Adrenal gland (tissue), 19 donors: ENCODE measurements at regions of chr17 and their contacts with region 1.

Region 1: GRCh38 chr17:73429440-73430164 is 117.8 kb upstream of the CDC42EP4 start:
- DNase-seq: peak; percentile 83 to 93 (median 89)
- H3K4me3 ChIP-seq: no peak overlapping the region
- H3K27ac ChIP-seq: no peak overlapping the region
- H3K4me1 ChIP-seq: no peaks in the 10 kb centered on the region
- H3K27me3 ChIP-seq: no peaks in the 10 kb centered on the region
- CTCF ChIP-seq: peak; percentile 90 to 98 (median 94)
- POLR2A ChIP-seq: no peak

Region 2: GRCh38 chr17:73255671-73256181 is 173.9 kb before region 1 on chr17:
- intact Hi-C with region 1: no loop called
- DNase-seq: peak in 6 of 7 donors; percentile 33 to 80 (median 49)
- H3K4me3 ChIP-seq: no peak overlapping the region
- H3K27ac ChIP-seq: no peak overlapping the region
- H3K4me1 ChIP-seq: no peaks in the 10 kb centered on the region
- H3K27me3 ChIP-seq: no peaks in the 10 kb centered on the region
- CTCF ChIP-seq: peak; percentile 97 to 100 (median 98)
- POLR2A ChIP-seq: no peak

Region 3: GRCh38 chr17:73710095-73710592 is 280.5 kb after region 1 on chr17:
- intact Hi-C with region 1: loop called (anchors 5 kb)
- DNase-seq: peak; percentile 57 to 80 (median 73)
- H3K4me3 ChIP-seq: no peak overlapping the region
- H3K27ac ChIP-seq: no peak overlapping the region
- H3K4me1 ChIP-seq: no peaks in the 10 kb centered on the region
- H3K27me3 ChIP-seq: no peaks in the 10 kb centered on the region
- CTCF ChIP-seq: peak; percentile 63 to 76 (median 74)
- POLR2A ChIP-seq: no peak

Region 4: DNA sequence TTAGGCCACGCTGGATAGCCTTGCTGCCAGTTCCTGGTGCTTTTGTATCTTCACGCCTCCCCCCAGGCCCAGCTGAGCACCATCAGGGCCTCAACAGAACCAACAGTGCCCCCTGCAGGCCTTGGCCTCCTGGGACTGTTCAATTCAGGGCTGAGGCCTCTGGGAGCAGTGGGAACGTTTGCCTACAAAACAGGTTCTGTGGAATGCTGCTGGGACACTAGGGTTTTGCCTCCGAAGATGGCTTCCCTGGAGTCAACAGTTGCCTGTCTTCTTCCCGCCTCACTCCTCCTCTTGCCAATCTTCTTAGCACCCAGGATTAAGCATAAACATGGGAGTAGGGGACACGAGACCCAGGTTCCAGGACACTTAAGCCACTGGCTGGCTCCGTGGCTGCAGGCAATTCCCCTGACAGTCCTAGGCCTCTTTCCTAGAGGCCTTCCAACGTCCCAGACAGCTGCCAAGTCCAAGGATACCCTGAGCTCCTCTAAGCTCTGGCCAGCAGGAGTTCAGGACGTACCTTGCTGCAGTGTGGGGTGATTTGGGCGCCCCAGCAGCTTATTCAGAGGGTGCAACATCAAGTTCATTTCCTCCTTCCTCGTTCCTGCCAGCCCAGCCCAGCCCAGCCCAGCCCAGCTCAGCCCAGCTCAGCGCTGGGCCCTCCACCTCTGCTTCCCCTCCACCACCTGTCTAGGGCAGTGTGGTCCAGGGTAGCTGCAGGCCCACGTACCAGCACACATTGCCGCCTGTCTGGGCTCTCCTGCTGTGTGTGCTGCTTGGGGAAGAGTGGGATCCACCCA is 527.3 kb after region 1 on chr17:
- intact Hi-C with region 1: loop called in 1 of 2 experiments (anchors 10 kb)
- DNase-seq: peak; percentile 32 to 74 (median 63)
- H3K4me3 ChIP-seq: no peak overlapping the region
- H3K27ac ChIP-seq: no peak overlapping the region
- H3K4me1 ChIP-seq: peaks cover 7 to 8% of the 10 kb centered on the region in 2 donors
- H3K27me3 ChIP-seq: peaks cover 5% of the 10 kb centered on the region
- CTCF ChIP-seq: peak; percentile 31 to 55 (median 48)
- POLR2A ChIP-seq: no peak

Region 5: DNA sequence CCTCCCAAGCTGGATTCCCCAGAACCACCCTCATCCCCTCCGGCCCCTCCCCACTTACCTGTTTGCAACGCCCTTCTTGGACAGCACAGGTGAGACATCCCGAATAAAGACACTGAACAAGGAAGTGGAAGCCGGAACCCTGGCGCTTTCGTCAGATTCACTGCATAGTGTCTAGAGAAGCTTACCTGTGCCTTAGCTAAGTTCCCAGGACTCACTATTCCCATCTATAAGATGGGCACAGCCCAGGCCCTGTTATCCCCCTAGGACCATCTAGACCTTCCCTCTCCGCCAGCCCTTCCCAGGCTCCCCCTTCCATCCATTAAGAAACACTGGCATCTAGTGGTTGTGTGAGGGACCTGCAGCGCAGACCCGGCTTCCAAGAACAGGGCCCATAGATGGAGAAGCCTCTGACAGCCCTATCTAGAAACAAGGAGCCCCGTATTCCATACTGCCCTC is 747.0 kb after region 1 on chr17:
- intact Hi-C with region 1: loop called (anchors 5 to 10 kb)
- DNase-seq: peak; percentile 42 to 85 (median 65)
- H3K4me3 ChIP-seq: no peak overlapping the region
- H3K27ac ChIP-seq: no peak overlapping the region
- H3K4me1 ChIP-seq: no peaks in the 10 kb centered on the region
- H3K27me3 ChIP-seq: no peaks in the 10 kb centered on the region
- CTCF ChIP-seq: peak; percentile 69 to 80 (median 74)
- POLR2A ChIP-seq: no peak